ENCODE measurements at regions of chr4 and their contacts with region 1.

Region 1: DNA sequence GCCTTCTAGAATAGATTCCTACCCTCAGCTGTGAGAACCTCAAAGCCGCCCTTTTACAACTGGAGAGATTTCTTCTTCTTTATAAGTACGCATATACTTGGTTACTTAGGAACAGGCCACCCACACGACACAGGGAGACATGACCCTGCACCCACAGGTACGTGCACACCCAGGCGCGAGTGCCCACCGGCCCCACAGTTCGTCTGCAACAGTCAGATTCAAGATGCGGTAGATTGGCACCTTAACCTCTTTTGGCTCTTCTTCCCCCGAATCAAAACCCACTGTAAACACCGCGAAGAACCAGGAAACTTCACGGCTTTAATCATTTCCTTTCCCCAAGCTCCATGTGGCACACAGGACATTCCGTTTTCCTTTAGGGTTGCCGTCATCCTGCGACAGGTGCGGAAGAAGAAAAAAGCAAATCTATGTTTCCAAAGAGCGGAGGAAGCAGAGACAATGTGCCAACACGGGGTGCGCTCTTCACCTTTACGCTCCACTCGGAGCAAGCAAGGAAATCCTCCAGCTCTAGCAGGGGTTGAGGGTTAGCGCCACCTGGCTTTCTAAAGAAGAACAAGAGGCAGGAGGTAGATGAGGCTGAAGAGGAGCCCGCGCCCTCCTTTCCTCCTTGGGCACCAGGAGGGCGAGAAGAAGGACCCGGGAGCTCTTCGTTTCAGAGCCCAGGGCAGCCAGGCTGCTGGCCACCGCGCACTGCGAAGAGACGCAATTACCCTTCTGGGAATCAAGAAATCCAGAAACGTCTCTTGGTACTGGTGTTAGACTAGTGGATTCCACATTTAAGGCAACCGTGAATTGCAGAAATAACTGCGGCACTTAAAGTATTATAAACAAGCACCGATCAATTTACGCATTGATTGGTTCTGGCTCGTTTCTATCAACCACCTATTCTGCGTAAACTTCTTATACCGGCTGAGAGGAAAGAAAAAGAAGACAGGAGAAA is 35.7 kb downstream of the HAND2 start:
- DNase-seq: peak in 4 of 5 donors; percentile 46 to 65 (median 55)
- ATAC-seq: peak; percentile 79 to 95 (median 92)
- H3K4me3 ChIP-seq: peak overlapping the region in 11 of 12 donors; percentile 17 to 56 (median 44)
- H3K27ac ChIP-seq: peak overlapping the region in 1 of 12 donors; percentile 31
- H3K4me1 ChIP-seq: peaks cover 0 to 27% (median 9%) of the 10 kb centered on the region in 12 donors
- H3K27me3 ChIP-seq: peaks cover 0 to 17% (median 0%) of the 10 kb centered on the region in 9 donors
- CTCF ChIP-seq: peak; percentile 60 to 86 (median 74)
- POLR2A ChIP-seq: no peak

Region 2: DNA sequence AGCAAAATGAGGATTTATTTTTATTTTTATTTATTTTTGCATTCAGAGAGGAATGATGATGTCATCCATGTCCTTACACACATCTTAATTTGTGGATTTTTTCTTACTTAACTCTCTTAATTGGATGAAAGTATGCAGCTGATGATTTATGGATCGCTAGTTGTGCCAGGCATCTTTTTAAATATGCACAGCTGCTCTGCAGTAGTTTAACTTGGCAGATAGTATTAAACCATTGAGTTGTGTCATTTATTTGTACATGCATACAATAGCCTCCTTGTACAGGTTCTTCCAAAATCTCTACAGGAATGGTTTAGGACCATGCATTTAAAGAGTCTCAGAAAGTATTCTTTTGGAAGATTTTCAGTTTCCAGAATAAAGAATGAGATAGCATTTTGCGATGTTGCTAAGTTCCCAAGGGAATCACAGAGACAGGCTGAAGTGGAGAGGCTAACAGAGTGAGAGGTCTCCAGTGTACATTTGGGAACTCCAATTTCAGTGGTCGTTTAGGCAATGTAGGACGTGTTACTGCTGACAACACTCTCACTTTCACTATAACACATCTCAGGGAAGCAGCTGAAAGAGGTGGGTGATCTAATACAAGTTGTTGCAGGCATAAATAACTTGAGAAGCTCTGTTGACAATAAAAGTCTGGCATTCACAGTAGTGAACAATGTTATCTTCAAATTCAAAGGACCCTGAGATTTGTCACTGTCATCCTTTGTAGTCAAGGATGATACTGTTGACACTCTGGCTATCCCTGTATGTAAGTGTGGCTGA is 45.5 kb before region 1 on chr4:
- intact Hi-C with region 1: loop called in 1 of 10 experiments (anchors 5 kb)
- DNase-seq: no peak
- ATAC-seq: peak; percentile 75 to 85 (median 80)
- H3K4me3 ChIP-seq: peak overlapping the region in 4 of 12 donors; percentile 2 to 20 (median 14)
- H3K27ac ChIP-seq: peak overlapping the region in 11 of 12 donors; percentile 31 to 84 (median 50)
- H3K4me1 ChIP-seq: peaks cover 0 to 28% (median 13%) of the 10 kb centered on the region in 12 donors
- H3K27me3 ChIP-seq: no peaks in the 10 kb centered on the region
- CTCF ChIP-seq: no peak
- POLR2A ChIP-seq: no peak

Region 3: GRCh38 chr4:173538909-173539445 is 44.7 kb after region 1 on chr4:
- intact Hi-C with region 1: no loop called
- DNase-seq: peak in 2 of 5 donors; percentile 39 to 44
- ATAC-seq: peak in 3 of 4 donors; percentile 33 to 43 (median 35)
- H3K4me3 ChIP-seq: peak overlapping the region; percentile 25 to 85 (median 54)
- H3K27ac ChIP-seq: peak overlapping the region; percentile 72 to 99 (median 92)
- H3K4me1 ChIP-seq: peaks cover 0 to 47% (median 15%) of the 10 kb centered on the region in 12 donors
- H3K27me3 ChIP-seq: peaks cover 0 to 85% (median 3%) of the 10 kb centered on the region in 9 donors
- CTCF ChIP-seq: no peak
- POLR2A ChIP-seq: no peak

Region 4: GRCh38 chr4:173794662-173795061 is 300.4 kb after region 1 on chr4:
- intact Hi-C with region 1: no loop called
- DNase-seq: no peak
- ATAC-seq: no peak
- H3K4me3 ChIP-seq: no peak overlapping the region
- H3K27ac ChIP-seq: no peak overlapping the region
- H3K4me1 ChIP-seq: no peaks in the 10 kb centered on the region
- H3K27me3 ChIP-seq: no peaks in the 10 kb centered on the region
- CTCF ChIP-seq: no peak
- POLR2A ChIP-seq: no peak

Region 5: DNA sequence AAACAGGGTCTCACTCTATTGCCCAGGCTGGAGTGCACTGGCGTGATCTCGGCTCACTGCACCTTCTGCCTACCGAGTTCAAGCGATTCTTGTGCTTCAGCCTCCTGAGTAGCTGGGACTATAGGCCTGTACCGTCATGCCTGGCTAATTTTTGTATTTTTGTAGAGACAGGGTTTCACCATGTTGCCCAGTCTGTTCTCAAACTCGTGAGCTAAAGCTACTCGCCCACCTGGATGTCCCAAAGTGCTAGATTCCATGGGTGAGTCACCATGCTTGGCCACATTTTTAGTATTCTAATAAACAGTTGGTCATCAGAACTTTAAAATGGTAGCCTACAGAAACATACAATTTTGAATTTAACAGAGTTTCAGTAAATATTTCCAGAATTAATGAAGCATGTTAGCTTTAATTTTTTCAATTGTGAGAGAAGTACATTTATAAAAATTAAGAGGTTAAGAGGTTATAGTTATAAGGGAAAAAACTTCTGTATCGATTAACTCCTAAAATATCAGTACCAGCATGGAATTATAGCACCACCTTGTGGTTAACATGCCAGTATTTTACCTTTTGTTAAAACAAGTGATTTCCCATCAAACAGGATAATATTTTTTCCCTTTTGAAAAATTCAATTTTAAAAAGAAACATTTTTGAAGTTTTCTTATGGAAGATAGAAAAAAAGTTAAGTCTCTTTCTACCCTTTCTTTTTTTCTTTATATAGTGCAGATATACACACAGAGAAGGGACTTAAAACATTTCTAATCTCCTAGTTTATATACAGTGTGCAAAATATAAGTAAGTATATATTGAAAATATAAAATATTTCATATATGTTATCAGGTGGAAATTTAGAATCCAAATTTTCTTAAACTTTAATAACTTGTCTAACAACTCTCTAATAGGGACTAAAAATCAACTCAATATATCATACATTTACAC is 824.8 kb after region 1 on chr4:
- intact Hi-C with region 1: loop called in 1 of 10 experiments (anchors 5 kb)
- DNase-seq: no peak
- ATAC-seq: no peak
- H3K4me3 ChIP-seq: no peak overlapping the region
- H3K27ac ChIP-seq: no peak overlapping the region
- H3K4me1 ChIP-seq: no peaks in the 10 kb centered on the region
- H3K27me3 ChIP-seq: no peaks in the 10 kb centered on the region
- CTCF ChIP-seq: peak; percentile 61 to 79 (median 68)
- POLR2A ChIP-seq: no peak